ENCODE measurements at regions of chr6 and their contacts with region 1.

Region 1: GRCh38 chr6:149513915-149514314 is 29.1 kb upstream of the ZC3H12D start:
- DNase-seq: no peak
- ATAC-seq: no peak
- H3K4me3 ChIP-seq: no peak overlapping the region
- H3K27ac ChIP-seq: no peak overlapping the region
- H3K4me1 ChIP-seq: no peaks in the 10 kb centered on the region
- H3K27me3 ChIP-seq: no peaks in the 10 kb centered on the region
- CTCF ChIP-seq: no peak
- EP300 ChIP-seq: no peak
- POLR2A ChIP-seq: no peak
- RAD21 ChIP-seq: no peak

Region 2: DNA sequence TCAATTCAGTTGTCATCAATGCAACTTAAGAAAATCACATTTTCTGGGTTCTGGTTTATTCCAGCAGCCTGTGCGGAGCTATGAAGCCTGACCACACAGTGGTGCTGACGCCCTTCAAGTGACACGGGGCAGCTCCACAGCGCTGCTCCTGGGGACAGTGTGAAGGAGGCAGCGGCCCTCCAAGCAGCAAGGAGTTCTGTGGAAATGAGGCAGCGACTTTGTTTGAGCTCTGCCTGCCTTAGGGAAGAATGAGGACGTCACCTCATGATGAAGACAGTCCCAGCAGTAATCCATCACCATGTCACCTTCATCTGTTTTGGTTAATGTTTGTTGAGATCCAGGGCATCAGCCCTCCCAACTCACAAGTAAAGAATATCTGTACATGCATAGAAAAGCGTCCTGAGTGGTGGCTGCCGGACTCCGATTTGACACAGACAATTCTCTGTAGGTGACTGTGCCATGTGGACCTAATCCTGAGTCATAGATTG is 935.6 kb before region 1 on chr6:
- CTCF ChIA-PET with region 1: interaction called, 10 read pairs
- POLR2A ChIA-PET with region 1: no interaction called
- RAD21 ChIA-PET with region 1: interaction called, 5 read pairs
- SMC1A ChIA-PET with region 1: no interaction called
- in situ Hi-C with region 1: no loop called
- intact Hi-C with region 1: no loop called
- DNase-seq: no peak
- ATAC-seq: peak; percentile 100
- H3K4me3 ChIP-seq: no peak overlapping the region
- H3K27ac ChIP-seq: no peak overlapping the region
- H3K4me1 ChIP-seq: no peaks in the 10 kb centered on the region
- H3K27me3 ChIP-seq: peaks cover 0 to 2% of the 10 kb centered on the region in 2 experiments; a peak in 2 of 4 replicates
- CTCF ChIP-seq: peak; percentile 96 to 99 (median 98); a peak in 5 of 6 replicates
- EP300 ChIP-seq: no peak
- POLR2A ChIP-seq: no peak
- RAD21 ChIP-seq: peak; percentile 99

Region 3: DNA sequence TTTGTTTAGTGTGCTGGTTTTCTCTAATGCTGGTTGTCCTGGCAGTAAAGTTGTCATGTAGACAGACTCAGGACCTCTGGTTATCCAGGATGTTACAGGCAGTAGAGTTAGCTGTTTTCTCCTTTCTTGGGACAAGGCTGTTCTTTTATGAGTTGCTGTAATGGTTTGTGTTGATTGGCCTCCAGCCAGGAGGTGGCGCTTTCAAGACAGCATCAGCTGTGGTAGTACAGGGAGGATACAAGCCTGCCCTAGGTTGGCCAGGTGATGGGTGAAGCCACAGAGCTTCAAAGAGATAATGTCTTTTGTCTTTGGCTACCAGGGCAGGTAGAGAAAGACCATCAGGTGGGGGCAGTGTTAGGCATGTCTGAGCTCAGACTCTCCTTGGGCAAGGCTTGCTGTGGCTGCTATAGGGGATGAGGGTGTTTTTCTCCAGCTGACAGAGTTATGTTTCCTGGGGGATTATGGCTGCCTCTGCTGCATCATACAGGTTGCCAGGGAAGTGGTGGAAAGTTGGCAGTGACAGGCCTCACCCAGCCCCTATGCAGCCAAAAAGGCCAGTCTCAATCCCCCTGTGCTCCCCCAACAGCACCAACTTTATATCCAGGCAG is 323.6 kb before region 1 on chr6:
- CTCF ChIA-PET with region 1: interaction called, 14 read pairs
- POLR2A ChIA-PET with region 1: no interaction called
- RAD21 ChIA-PET with region 1: interaction called, 4 read pairs
- SMC1A ChIA-PET with region 1: interaction called, 11 read pairs
- in situ Hi-C with region 1: no loop called
- intact Hi-C with region 1: loop called (anchors 1 kb)
- DNase-seq: no peak
- ATAC-seq: peak; percentile 95
- H3K4me3 ChIP-seq: no peak overlapping the region
- H3K27ac ChIP-seq: no peak overlapping the region
- H3K4me1 ChIP-seq: peaks cover 5% of the 10 kb centered on the region
- H3K27me3 ChIP-seq: no peaks in the 10 kb centered on the region
- CTCF ChIP-seq: peak; percentile 39 to 57 (median 51)
- EP300 ChIP-seq: no peak
- POLR2A ChIP-seq: no peak
- RAD21 ChIP-seq: peak; percentile 61

Region 4: GRCh38 chr6:149445095-149445466 is 68.8 kb before region 1 on chr6:
- CTCF ChIA-PET with region 1: interaction called, 15 read pairs
- POLR2A ChIA-PET with region 1: no interaction called
- RAD21 ChIA-PET with region 1: interaction called, 6 read pairs
- SMC1A ChIA-PET with region 1: interaction called, 25 read pairs
- in situ Hi-C with region 1: no loop called
- intact Hi-C with region 1: no loop called
- DNase-seq: no peak
- ATAC-seq: peak; percentile 77
- H3K4me3 ChIP-seq: no peak overlapping the region
- H3K27ac ChIP-seq: no peak overlapping the region
- H3K4me1 ChIP-seq: no peaks in the 10 kb centered on the region
- H3K27me3 ChIP-seq: no peaks in the 10 kb centered on the region
- CTCF ChIP-seq: no peak
- EP300 ChIP-seq: no peak
- POLR2A ChIP-seq: no peak
- RAD21 ChIP-seq: no peak

Region 5: GRCh38 chr6:149478631-149479314 is 35.1 kb before region 1 on chr6:
- CTCF ChIA-PET with region 1: interaction called, 27 read pairs
- POLR2A ChIA-PET with region 1: interaction called, 5 read pairs
- RAD21 ChIA-PET with region 1: interaction called, 28 read pairs
- SMC1A ChIA-PET with region 1: interaction called, 42 read pairs
- in situ Hi-C with region 1: no loop called
- intact Hi-C with region 1: loop called (anchors 2 kb)
- DNase-seq: no peak
- ATAC-seq: no peak
- H3K4me3 ChIP-seq: peak overlapping the region; percentile 49; the same call in 1 of the 2 replicates
- H3K27ac ChIP-seq: peak overlapping the region; percentile 48; the same call in 1 of the 2 replicates
- H3K4me1 ChIP-seq: peaks cover 34% of the 10 kb centered on the region
- H3K27me3 ChIP-seq: no peaks in the 10 kb centered on the region
- CTCF ChIP-seq: no peak
- EP300 ChIP-seq: no peak
- POLR2A ChIP-seq: no peak
- RAD21 ChIP-seq: no peak

Region 6: DNA sequence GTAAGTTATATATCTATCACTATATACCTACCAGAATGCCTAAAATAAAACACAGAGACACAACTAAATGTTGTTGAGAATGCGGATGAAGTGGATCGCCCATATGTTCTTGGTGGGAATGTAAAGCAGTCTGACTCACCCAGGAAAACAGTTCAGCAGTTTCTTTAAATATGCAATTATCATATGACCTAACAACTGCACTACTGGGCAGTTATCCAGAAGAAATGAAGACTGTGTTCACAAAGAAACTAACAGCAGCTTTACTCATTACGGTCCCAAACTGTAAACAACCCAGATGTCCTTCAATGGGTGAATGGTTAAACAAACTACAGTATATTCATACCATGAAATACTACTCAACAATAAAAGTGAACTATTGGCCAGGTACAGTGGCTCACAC is 14.8 kb before region 1 on chr6:
- CTCF ChIA-PET with region 1: interaction called, 54 read pairs
- POLR2A ChIA-PET with region 1: interaction called, 4 read pairs
- RAD21 ChIA-PET with region 1: interaction called, 7 read pairs
- SMC1A ChIA-PET with region 1: interaction called, 61 read pairs
- in situ Hi-C with region 1: no loop called
- intact Hi-C with region 1: no loop called
- DNase-seq: no peak
- ATAC-seq: no peak
- H3K4me3 ChIP-seq: no peak overlapping the region
- H3K27ac ChIP-seq: no peak overlapping the region
- H3K4me1 ChIP-seq: peaks cover 31% of the 10 kb centered on the region
- H3K27me3 ChIP-seq: no peaks in the 10 kb centered on the region
- CTCF ChIP-seq: no peak
- EP300 ChIP-seq: no peak
- POLR2A ChIP-seq: no peak
- RAD21 ChIP-seq: no peak

Region 7: GRCh38 chr6:149586149-149586548 is 72.2 kb after region 1 on chr6:
- CTCF ChIA-PET with region 1: no interaction called
- POLR2A ChIA-PET with region 1: no interaction called
- RAD21 ChIA-PET with region 1: no interaction called
- SMC1A ChIA-PET with region 1: no interaction called
- in situ Hi-C with region 1: no loop called
- intact Hi-C with region 1: no loop called
- DNase-seq: no peak
- ATAC-seq: no peak
- H3K4me3 ChIP-seq: no peak overlapping the region
- H3K27ac ChIP-seq: no peak overlapping the region
- H3K4me1 ChIP-seq: no peaks in the 10 kb centered on the region
- H3K27me3 ChIP-seq: no peaks in the 10 kb centered on the region
- CTCF ChIP-seq: no peak
- EP300 ChIP-seq: no peak
- POLR2A ChIP-seq: no peak
- RAD21 ChIP-seq: no peak

Region 8: GRCh38 chr6:149628875-149629510 is 115.1 kb after region 1 on chr6:
- CTCF ChIA-PET with region 1: no interaction called
- POLR2A ChIA-PET with region 1: no interaction called
- RAD21 ChIA-PET with region 1: no interaction called
- SMC1A ChIA-PET with region 1: no interaction called
- in situ Hi-C with region 1: no loop called
- intact Hi-C with region 1: no loop called
- DNase-seq: peak; percentile 44
- ATAC-seq: peak; percentile 96
- H3K4me3 ChIP-seq: peak overlapping the region; percentile 29; the same call in 1 of the 2 replicates
- H3K27ac ChIP-seq: peak overlapping the region; percentile 74
- H3K4me1 ChIP-seq: peaks cover 12% of the 10 kb centered on the region
- H3K27me3 ChIP-seq: no peaks in the 10 kb centered on the region
- CTCF ChIP-seq: 0 out of 6 replicates have a peak, but pooled peaks of 2 of the 3 experiments have one; percentile 8 to 9
- EP300 ChIP-seq: no peak
- POLR2A ChIP-seq: no peak
- RAD21 ChIP-seq: peak; percentile 17; the same call in 1 of the 2 replicates

Measured in GM12878 (cell line).